ENCODE measurements at regions of chr4 and their contacts with region 1.

Region 1: DNA sequence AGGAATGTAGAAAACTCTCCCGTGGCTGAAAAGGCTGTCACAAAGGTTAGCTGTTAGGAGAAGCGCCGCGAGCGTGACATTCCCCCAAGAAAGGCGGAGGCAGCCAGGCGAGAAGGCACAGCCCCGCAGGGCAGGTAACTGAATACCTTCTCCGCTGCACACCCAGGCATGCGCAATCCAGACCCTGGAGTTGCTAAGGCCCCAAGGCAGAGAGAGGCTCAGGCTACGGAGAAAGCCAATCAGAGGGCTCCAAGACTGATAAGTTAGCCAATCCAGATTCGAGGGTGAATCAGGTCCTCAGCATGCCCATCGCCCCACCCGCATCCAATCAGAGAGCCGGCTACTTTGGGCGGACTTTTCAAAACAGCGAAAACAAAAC is 485 bp upstream of the CCNG2 start:
- DNase-seq: peak in 6 of 9 donors; percentile 99 to 100 (median 99)
- ATAC-seq: peak; percentile 96
- H3K4me3 ChIP-seq: peak overlapping the region; percentile 99
- H3K4me3 Mint-ChIP-seq: peak overlapping the region; percentile 92 to 99 (median 98)
- H3K27ac ChIP-seq: peak overlapping the region; percentile 85
- H3K27ac Mint-ChIP-seq: peak overlapping the region; percentile 88 to 99 (median 99)
- H3K4me1 ChIP-seq: peaks cover 10 to 17% of the 10 kb centered on the region in 2 donors
- H3K4me1 Mint-ChIP-seq: peaks cover 13 to 52% (median 43%) of the 10 kb centered on the region in 7 donors
- H3K27me3 ChIP-seq: no peaks in the 10 kb centered on the region
- H3K27me3 Mint-ChIP-seq: peaks cover 0 to 6% (median 0%) of the 10 kb centered on the region in 5 donors

Region 2: DNA sequence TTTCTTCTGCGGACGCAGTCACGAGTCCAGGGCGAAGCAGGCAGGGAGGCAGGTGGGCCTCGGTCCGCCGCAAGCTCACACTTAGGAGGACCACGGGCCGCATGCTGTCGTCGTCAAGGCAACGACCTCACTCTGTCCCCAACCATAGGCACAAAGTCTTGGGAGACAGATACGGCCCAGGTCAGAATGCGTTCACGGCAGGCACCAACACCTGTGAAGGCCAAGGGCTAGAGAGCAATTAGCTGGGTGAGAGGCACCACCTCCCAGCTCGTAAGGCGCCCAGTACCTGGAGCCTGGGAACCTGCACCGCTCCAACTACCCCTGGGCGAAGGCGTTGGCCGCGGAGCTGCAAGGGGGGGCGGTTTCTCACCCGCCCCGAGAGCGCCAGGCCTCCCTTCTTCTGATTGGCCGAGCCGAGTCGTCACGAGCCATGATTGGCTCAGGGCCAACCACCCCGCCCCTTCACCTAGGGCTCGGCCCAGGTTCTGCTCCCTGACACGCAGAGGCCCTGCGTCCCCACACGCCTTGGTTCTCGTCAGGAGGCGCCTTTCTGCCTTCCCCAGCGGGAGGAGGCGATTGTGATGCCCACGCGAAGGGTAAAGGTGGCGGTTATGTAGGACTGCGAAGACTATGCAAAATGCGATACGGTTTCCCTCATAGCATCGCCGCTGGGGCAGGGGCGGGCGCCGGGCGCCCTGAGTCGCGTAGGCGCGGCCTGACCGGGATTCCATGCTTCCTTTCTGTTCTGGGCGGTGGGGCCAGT is 1526.2 kb before region 1 on chr4 and contains the start of gene CDKL2:
- CTCF ChIA-PET with region 1: no interaction called
- POLR2A ChIA-PET with region 1: no interaction called
- intact Hi-C with region 1: loop called in 1 of 2 experiments (anchors 5 kb)
- DNase-seq: peak; percentile 85 to 93 (median 91)
- ATAC-seq: peak; percentile 100
- H3K4me3 ChIP-seq: peak within 1 kb of the TSS; percentile 74
- H3K4me3 Mint-ChIP-seq: peak within 1 kb of the TSS; percentile 88 to 97 (median 94)
- H3K27ac ChIP-seq: peak within 1 kb of the TSS; percentile 73
- H3K27ac Mint-ChIP-seq: peak within 1 kb of the TSS; percentile 66 to 94 (median 86)
- H3K4me1 ChIP-seq: peaks cover 0 to 7% of the 10 kb centered on the region in 2 donors
- H3K4me1 Mint-ChIP-seq: peaks cover 6 to 18% (median 11%) of the 10 kb centered on the region in 7 donors
- H3K27me3 ChIP-seq: no peaks in the 10 kb centered on the region
- H3K27me3 Mint-ChIP-seq: peaks cover 0 to 12% (median 0%) of the 10 kb centered on the region in 5 donors
- total RNA-seq, gene CDKL2: 0.22 to 1.2 (median 0.34) TPM

Region 3: GRCh38 chr4:75989846-75990528 is 1166.5 kb before region 1 on chr4:
- CTCF ChIA-PET with region 1: no interaction called
- POLR2A ChIA-PET with region 1: interaction called, 3 read pairs
- intact Hi-C with region 1: loop called in 1 of 2 experiments (anchors 2 kb)
- DNase-seq: peak in 4 of 9 donors; percentile 2 to 7 (median 4)
- ATAC-seq: no peak
- H3K4me3 ChIP-seq: peak overlapping the region; percentile 86
- H3K4me3 Mint-ChIP-seq: peak overlapping the region; percentile 87 to 98 (median 96)
- H3K27ac ChIP-seq: peak overlapping the region; percentile 86
- H3K27ac Mint-ChIP-seq: peak overlapping the region; percentile 85 to 97 (median 93)
- H3K4me1 ChIP-seq: peaks cover 13 to 39% of the 10 kb centered on the region in 2 donors
- H3K4me1 Mint-ChIP-seq: peaks cover 24 to 38% (median 30%) of the 10 kb centered on the region in 7 donors
- H3K27me3 ChIP-seq: no peaks in the 10 kb centered on the region
- H3K27me3 Mint-ChIP-seq: peaks cover 0 to 8% (median 2%) of the 10 kb centered on the region in 5 donors

Region 4: DNA sequence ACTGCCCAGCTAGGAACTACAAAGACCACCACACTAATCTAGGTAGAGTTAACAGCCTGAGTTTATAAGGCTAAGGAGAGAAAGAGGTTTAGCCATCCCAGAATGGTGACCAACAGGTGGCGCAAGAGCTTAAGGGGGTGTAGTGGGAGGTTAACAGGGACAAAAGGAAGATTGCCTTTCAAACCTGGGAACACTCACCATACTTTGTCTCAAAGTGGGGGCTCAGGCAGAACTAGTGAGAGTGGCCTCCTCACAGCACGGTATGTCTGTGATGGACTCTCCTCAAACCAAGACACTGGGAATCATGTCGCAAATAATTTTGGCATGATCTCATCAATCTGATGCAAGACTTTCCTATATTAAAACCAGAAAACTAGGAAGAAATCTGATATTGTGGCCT is 104.2 kb before region 1 on chr4:
- CTCF ChIA-PET with region 1: no interaction called
- POLR2A ChIA-PET with region 1: no interaction called
- intact Hi-C with region 1: loop called in 1 of 2 experiments (anchors 2 kb)
- DNase-seq: peak in 7 of 9 donors; percentile 18 to 59 (median 42)
- ATAC-seq: peak; percentile 74
- H3K4me3 ChIP-seq: no peak overlapping the region
- H3K4me3 Mint-ChIP-seq: no peak overlapping the region
- H3K27ac ChIP-seq: no peak overlapping the region
- H3K27ac Mint-ChIP-seq: peak overlapping the region in 6 of 9 donors; percentile 14 to 83 (median 70)
- H3K4me1 ChIP-seq: no peaks in the 10 kb centered on the region
- H3K4me1 Mint-ChIP-seq: peaks cover 0 to 19% (median 9%) of the 10 kb centered on the region in 7 donors
- H3K27me3 ChIP-seq: no peaks in the 10 kb centered on the region
- H3K27me3 Mint-ChIP-seq: no peaks in the 10 kb centered on the region

Region 5: DNA sequence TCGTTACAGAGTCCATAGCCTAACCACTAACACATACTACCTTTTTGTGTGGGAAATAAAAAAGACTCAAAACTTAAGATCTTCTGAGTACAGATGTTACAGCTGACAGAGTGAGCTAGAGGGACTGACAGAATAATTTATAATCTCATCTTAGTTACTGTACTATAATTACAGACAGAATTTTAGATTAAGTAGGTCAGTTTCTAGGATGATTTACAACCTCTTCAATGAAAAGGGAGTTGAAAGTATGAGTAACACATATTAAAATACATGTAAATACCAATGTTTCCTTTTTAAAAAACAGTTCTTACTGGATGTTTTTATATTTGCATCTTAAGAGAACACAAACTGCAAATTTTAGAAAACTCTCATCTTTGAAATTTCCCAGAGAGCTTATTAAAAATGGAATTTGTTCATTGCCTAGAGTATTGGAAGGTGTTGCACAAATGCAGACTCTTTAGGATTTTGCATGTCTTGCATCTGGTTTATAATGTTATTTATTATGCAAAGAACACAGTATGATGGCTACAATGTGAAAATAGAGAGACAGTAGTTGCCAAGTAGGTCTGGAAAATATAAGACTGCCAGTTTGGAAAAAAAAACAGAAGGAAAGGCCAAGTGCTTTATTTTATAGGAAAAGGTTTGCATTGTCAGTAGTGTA is 23.7 kb before region 1 on chr4:
- CTCF ChIA-PET with region 1: no interaction called
- POLR2A ChIA-PET with region 1: no interaction called
- intact Hi-C with region 1: no loop called
- DNase-seq: no peak
- ATAC-seq: no peak
- H3K4me3 ChIP-seq: no peak overlapping the region
- H3K4me3 Mint-ChIP-seq: no peak overlapping the region
- H3K27ac ChIP-seq: no peak overlapping the region
- H3K27ac Mint-ChIP-seq: no peak overlapping the region
- H3K4me1 ChIP-seq: no peaks in the 10 kb centered on the region
- H3K4me1 Mint-ChIP-seq: peaks cover 2 to 9% (median 6%) of the 10 kb centered on the region in 7 donors
- H3K27me3 ChIP-seq: no peaks in the 10 kb centered on the region
- H3K27me3 Mint-ChIP-seq: peaks cover 0 to 36% (median 0%) of the 10 kb centered on the region in 5 donors

Region 6: GRCh38 chr4:77193511-77194102 is 37.1 kb after region 1 on chr4:
- CTCF ChIA-PET with region 1: interaction called, 3 read pairs
- POLR2A ChIA-PET with region 1: interaction called, 13 read pairs
- intact Hi-C with region 1: loop called (anchors 1 kb)
- DNase-seq: peak; percentile 47 to 79 (median 72)
- ATAC-seq: peak; percentile 95
- H3K4me3 ChIP-seq: peak overlapping the region; percentile 25
- H3K4me3 Mint-ChIP-seq: peak overlapping the region; percentile 78 to 93 (median 90)
- H3K27ac ChIP-seq: peak overlapping the region; percentile 52
- H3K27ac Mint-ChIP-seq: peak overlapping the region; percentile 88 to 97 (median 92)
- H3K4me1 ChIP-seq: peaks cover 0 to 6% of the 10 kb centered on the region in 2 donors
- H3K4me1 Mint-ChIP-seq: peaks cover 5 to 22% (median 18%) of the 10 kb centered on the region in 7 donors
- H3K27me3 ChIP-seq: peaks cover 0 to 5% of the 10 kb centered on the region in 2 donors
- H3K27me3 Mint-ChIP-seq: peaks cover 0 to 10% (median 0%) of the 10 kb centered on the region in 5 donors

Region 7: DNA sequence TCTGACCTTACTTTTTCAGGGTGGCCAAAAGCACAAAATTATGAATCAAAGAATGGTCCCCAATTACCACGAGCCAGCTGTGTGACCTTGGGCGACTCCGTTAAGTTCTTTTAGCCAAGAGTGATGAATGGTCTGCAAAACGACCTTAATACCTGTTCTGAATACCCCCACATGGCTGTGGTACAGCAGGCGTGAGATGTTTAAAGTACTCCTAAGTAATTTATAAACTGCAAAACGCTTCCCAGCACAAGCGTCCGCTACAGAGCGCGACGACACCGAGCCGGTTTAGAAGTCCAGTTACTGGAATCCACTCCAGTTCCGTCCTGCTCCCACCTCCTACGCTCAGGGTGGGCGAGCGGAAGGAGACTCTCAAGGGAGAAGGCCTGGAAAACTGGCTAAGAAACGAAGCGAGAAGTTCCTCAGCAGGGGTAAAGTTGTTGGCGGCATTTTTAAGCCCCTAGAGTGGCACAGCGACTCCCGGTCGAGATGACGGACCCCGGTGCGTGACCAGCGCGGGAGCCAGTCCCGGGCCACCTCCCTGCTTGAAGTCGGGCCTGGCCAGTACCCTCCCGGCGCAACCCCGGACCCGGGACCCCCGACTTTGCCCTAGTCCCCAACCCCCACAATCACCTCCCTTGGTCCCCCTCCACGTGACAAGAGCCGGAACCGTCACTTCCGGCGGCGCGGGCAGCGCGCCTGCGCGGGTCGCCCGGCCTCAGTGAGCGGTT is 1618.9 kb after region 1 on chr4:
- CTCF ChIA-PET with region 1: no interaction called
- POLR2A ChIA-PET with region 1: no interaction called
- intact Hi-C with region 1: loop called (anchors 2 to 5 kb)
- DNase-seq: peak; percentile 80 to 93 (median 91)
- ATAC-seq: peak; percentile 81
- H3K4me3 ChIP-seq: peak overlapping the region; percentile 87
- H3K4me3 Mint-ChIP-seq: peak overlapping the region; percentile 88 to 97 (median 96)
- H3K27ac ChIP-seq: peak overlapping the region; percentile 78
- H3K27ac Mint-ChIP-seq: peak overlapping the region; percentile 84 to 98 (median 95)
- H3K4me1 ChIP-seq: peaks cover 4 to 14% of the 10 kb centered on the region in 2 donors
- H3K4me1 Mint-ChIP-seq: peaks cover 7 to 34% (median 13%) of the 10 kb centered on the region in 7 donors
- H3K27me3 ChIP-seq: no peaks in the 10 kb centered on the region
- H3K27me3 Mint-ChIP-seq: no peaks in the 10 kb centered on the region

Measured in naive thymus-derived CD4-positive, alpha-beta T cell (primary cell).